ENCODE measurements at regions of chr11 and their contacts with region 1.

Region 1: DNA sequence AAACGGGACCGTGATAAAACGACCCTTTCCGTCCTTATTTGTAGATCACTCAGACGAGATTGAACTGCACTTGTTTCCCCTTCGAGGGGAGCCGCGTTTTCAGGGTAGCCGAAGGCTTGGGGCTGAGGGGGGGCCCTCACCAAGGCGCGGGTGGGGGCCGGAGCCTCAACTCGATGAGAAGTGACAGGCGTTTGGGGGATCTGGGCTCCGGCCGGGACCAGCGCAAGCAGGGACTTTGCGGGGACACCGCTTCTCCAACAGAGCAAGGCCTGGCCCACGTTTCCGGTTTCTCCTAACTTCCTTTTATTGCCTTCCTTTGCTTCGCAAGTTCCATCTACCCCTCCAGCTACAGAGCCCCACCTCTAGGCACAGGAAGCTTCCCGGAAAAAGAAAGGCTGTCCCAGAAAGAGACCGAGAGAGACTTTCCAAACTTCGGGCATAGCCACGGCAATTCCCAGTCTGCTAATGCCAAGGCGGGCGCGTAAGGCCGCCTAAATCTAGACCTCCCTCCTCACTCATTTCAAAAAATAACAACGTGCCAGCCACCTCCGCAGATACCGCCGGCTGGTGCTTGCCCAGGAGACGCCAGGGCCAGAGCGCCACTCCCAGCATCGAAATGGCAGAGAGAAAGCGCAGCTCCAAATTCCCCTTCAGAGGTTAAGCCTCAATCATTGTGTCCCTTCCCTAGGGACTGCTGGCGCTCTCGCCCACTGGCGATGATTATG is 6.6 kb downstream of the PAX6 start:
- DNase-seq: no peak
- H3K4me3 ChIP-seq: no peak overlapping the region
- H3K27ac ChIP-seq: no peak overlapping the region
- H3K4me1 ChIP-seq: no peaks in the 10 kb centered on the region
- H3K27me3 ChIP-seq: peaks cover 94 to 98% of the 10 kb centered on the region in 2 experiments
- CTCF ChIP-seq: no peak
- POLR2A ChIP-seq: no peak

Region 2: DNA sequence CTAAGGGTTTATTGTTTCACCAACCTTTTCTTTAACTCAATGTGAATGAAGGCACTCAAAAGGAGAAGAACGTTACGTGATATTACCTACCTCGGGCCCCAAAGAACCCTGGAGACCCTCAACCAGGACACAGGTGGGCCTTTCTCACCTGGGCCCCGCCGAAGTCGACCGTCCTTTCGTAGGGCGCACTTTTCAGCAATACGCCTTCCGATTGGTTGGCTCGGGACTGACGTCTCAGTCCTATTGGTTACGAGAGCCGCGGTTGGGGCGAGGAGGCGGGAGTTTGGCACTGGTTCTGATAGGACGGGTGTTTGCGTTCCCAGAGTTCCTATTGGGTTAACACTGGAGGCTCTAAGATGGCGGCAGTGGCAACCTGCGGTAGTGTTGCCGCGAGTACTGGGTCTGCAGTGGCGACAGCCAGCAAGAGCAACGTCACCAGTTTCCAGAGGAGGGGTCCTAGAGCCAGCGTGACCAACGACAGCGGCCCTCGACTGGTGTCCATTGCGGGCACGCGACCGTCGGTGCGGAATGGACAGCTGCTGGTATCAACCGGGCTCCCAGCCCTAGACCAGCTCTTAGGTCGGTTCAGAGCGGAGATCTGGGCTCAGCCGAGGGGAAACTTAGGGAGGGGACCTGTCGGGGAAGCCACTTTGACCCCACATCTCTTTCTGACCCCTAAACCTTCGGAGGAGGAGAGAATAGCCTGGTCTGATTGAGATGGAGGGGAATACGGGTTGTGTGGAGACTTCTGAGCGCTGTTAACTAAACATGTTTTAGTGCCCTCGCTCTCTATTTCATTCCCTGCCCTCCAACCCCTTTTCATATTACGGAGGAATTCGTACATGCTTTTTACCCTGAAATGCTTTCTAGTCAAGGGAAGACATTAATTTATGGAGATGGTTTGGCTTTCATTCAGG is 294.8 kb before region 1 on chr11 and contains the starts of genes ELP4 and IMMP1L:
- CTCF ChIA-PET with region 1: no interaction called
- POLR2A ChIA-PET with region 1: no interaction called
- dilution Hi-C with region 1: no loop called
- intact Hi-C with region 1: loop called (anchors 5 kb)
- DNase-seq: peak; percentile 99
- H3K4me3 ChIP-seq: peak within 1 kb of the TSS; percentile 31 to 99 (median 98)
- H3K27ac ChIP-seq: peak within 1 kb of the TSS; percentile 16
- H3K4me1 ChIP-seq: peaks cover 11% of the 10 kb centered on the region
- H3K27me3 ChIP-seq: no peaks in the 10 kb centered on the region
- CTCF ChIP-seq: no peak
- POLR2A ChIP-seq: peak; percentile 88
- total RNA-seq, gene ELP4: 14.1 and 16.3 TPM in 2 replicates
- total RNA-seq, gene IMMP1L: 14.8 and 16.8 TPM in 2 replicates

Region 3: GRCh38 chr11:32706949-32707736 is 902.7 kb after region 1 on chr11:
- CTCF ChIA-PET with region 1: no interaction called
- POLR2A ChIA-PET with region 1: no interaction called
- dilution Hi-C with region 1: no loop called
- intact Hi-C with region 1: no loop called
- DNase-seq: peak; percentile 10
- H3K4me3 ChIP-seq: no peak overlapping the region
- H3K27ac ChIP-seq: no peak overlapping the region
- H3K4me1 ChIP-seq: no peaks in the 10 kb centered on the region
- H3K27me3 ChIP-seq: no peaks in the 10 kb centered on the region
- CTCF ChIP-seq: no peak
- POLR2A ChIP-seq: no peak